ENCODE measurements at regions of chr5 and their contacts with region 1.

Region 1: DNA sequence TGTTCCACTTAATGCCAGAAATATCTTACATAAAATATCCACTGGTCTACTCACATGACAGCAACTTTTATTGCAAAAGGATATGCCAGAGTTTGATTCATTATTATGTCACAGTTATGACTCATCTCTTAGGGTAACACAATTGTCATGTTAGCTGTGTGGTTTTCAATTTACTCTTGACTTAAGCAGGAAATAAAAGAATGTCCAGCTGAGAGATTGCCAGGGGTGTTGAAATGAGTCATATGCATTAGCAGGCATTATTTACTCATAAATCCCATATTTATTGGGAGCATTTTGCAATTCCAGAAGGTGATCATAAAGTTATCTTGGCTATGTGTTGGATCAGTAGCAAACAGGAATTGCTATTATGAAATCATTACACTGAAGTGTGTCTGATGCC is 1164.6 kb upstream of the CDH18 start:
- DNase-seq: peak; percentile 99
- ATAC-seq: peak; percentile 97
- H3K4me3 ChIP-seq: no peak overlapping the region
- H3K27ac ChIP-seq: no peak overlapping the region; the same call in 1 of the 2 replicates
- H3K4me1 ChIP-seq: peaks cover 4% of the 10 kb centered on the region; the same call in 1 of the 2 replicates
- H3K27me3 ChIP-seq: no peaks in the 10 kb centered on the region
- CTCF ChIP-seq: no peak

Region 2: GRCh38 chr5:20972419-20972925 is 180.1 kb before region 1 on chr5:
- CTCF ChIA-PET with region 1: no interaction called
- POLR2A ChIA-PET with region 1: no interaction called
- in situ Hi-C with region 1: no loop called
- intact Hi-C with region 1: loop called (anchors 10 kb)
- DNase-seq: peak; percentile 89
- ATAC-seq: peak; percentile 100
- H3K4me3 ChIP-seq: peak overlapping the region; percentile 47 to 67
- H3K27ac ChIP-seq: peak overlapping the region; percentile 97
- H3K4me1 ChIP-seq: no peaks in the 10 kb centered on the region; the same call in 1 of the 2 replicates
- H3K27me3 ChIP-seq: no peaks in the 10 kb centered on the region
- CTCF ChIP-seq: peak; percentile 80

Region 3: GRCh38 chr5:21792736-21793135 is 640.1 kb after region 1 on chr5:
- CTCF ChIA-PET with region 1: no interaction called
- POLR2A ChIA-PET with region 1: no interaction called
- in situ Hi-C with region 1: no loop called
- intact Hi-C with region 1: no loop called
- DNase-seq: no peak
- ATAC-seq: no peak
- H3K4me3 ChIP-seq: no peak overlapping the region
- H3K27ac ChIP-seq: no peak overlapping the region
- H3K4me1 ChIP-seq: no peaks in the 10 kb centered on the region
- H3K27me3 ChIP-seq: no peaks in the 10 kb centered on the region
- CTCF ChIP-seq: no peak